Natural killer cell (primary cell): ENCODE measurements at regions of chrX and their contacts with region 1.

Region 1: DNA sequence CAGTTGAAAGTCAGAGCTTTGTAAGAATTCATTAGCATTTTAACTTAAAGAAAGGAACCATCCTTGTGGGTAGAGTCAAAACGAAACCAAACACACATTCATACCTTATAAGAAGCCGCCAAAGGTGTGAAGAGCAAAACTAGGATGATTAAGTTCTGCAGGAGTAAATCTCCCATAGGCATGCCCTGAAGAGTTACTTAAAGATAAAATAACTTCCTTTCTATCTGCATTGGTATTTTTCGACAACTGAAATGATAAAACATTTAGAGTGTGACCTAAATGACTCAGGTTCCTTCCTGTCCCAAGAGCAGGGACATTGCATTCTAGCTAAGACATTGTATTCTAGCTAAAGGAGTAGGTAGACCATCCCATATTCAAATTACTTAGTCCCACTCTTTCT is 75.3 kb downstream of the BCOR start:
- DNase-seq: no peak
- ATAC-seq: peak in 1 of 3 donors; percentile 37
- H3K4me3 ChIP-seq: no peak overlapping the region
- H3K4me3 Mint-ChIP-seq: no peak overlapping the region
- H3K27ac ChIP-seq: no peak overlapping the region
- H3K27ac Mint-ChIP-seq: no peak overlapping the region
- H3K4me1 ChIP-seq: peaks cover 8% of the 10 kb centered on the region
- H3K4me1 Mint-ChIP-seq: peaks cover 10 to 15% of the 10 kb centered on the region in 2 donors
- H3K27me3 ChIP-seq: no peaks in the 10 kb centered on the region
- H3K27me3 Mint-ChIP-seq: peaks cover 0 to 6% of the 10 kb centered on the region in 2 donors
- CTCF ChIP-seq: no peak

Region 2: GRCh38 chrX:40054792-40055191 is 32.4 kb after region 1 on chrX:
- intact Hi-C with region 1: no loop called
- DNase-seq: no peak
- ATAC-seq: no peak
- H3K4me3 ChIP-seq: no peak overlapping the region
- H3K4me3 Mint-ChIP-seq: no peak overlapping the region
- H3K27ac ChIP-seq: no peak overlapping the region
- H3K27ac Mint-ChIP-seq: no peak overlapping the region
- H3K4me1 ChIP-seq: no peaks in the 10 kb centered on the region
- H3K4me1 Mint-ChIP-seq: no peaks in the 10 kb centered on the region
- H3K27me3 ChIP-seq: no peaks in the 10 kb centered on the region
- H3K27me3 Mint-ChIP-seq: no peaks in the 10 kb centered on the region
- CTCF ChIP-seq: no peak

Region 3: GRCh38 chrX:40169193-40170101 is 147.0 kb after region 1 on chrX:
- intact Hi-C with region 1: loop called (anchors 10 kb)
- DNase-seq: peak; percentile 60 to 89
- ATAC-seq: peak; percentile 67 to 82 (median 70)
- H3K4me3 ChIP-seq: peak overlapping the region; percentile 20
- H3K4me3 Mint-ChIP-seq: peak overlapping the region; percentile 78
- H3K27ac ChIP-seq: peak overlapping the region; percentile 92
- H3K27ac Mint-ChIP-seq: peak overlapping the region; percentile 63 to 93
- H3K4me1 ChIP-seq: peaks cover 79% of the 10 kb centered on the region
- H3K4me1 Mint-ChIP-seq: peaks cover 35 to 48% of the 10 kb centered on the region in 2 donors
- H3K27me3 ChIP-seq: no peaks in the 10 kb centered on the region
- H3K27me3 Mint-ChIP-seq: peaks cover 21 to 33% of the 10 kb centered on the region in 2 donors
- CTCF ChIP-seq: peak; percentile 15